Thyroid gland (tissue), 4 donors: ENCODE measurements at regions of chr19 and their contacts with region 1.

Region 1: DNA sequence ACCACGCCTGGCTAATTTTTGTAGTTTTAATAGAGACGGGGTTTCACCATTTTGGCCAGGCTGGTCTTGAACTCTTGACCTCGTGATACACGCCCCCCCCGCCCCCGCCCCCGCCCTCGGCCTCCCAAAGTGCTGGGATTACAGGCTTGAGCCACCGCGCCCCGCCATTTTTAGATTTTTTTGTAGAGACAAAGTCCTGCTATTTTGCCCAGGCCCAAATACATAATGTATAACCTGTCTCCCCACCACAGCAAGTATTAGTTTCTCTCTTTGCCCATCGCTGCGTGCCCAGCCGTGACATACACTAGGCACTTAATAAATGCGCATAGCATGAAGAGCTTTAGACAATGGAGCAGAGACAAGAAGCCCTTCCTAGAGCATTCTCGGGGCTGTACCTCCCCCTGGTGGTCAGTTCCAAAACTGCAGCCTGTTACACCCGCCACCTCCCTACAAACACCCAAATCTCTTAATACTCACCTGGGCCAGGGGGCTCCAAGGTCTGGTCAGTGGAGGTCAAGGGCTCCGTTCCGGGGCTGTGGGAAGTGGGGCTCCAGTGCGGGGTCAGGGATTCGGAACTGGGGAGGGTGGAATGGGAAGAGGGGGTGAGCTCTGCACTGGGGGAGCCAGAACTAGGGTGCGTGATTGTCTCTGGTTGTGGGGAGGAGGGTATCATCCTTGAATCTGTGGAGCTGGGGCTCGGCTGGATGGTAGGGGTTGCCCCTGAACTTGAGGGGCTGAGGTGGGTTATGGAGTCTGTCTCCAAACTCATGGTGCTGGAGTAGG is 22.5 kb downstream of the IQCN start:
- DNase-seq: peak; percentile 66 to 72
- H3K4me3 ChIP-seq: no peak overlapping the region
- H3K27ac ChIP-seq: no peak overlapping the region
- H3K4me1 ChIP-seq: peaks cover 21 to 39% of the 10 kb centered on the region in 2 donors
- H3K27me3 ChIP-seq: no peaks in the 10 kb centered on the region
- CTCF ChIP-seq: peak; percentile 93 to 97 (median 94)
- POLR2A ChIP-seq: no peak

Region 2: GRCh38 chr19:18117692-18118378 is 133.9 kb before region 1 on chr19:
- intact Hi-C with region 1: loop called (anchors 5 kb)
- DNase-seq: peak; percentile 90 to 91
- H3K4me3 ChIP-seq: peak overlapping the region; percentile 14 to 53 (median 47)
- H3K27ac ChIP-seq: peak overlapping the region; percentile 25 to 66 (median 63)
- H3K4me1 ChIP-seq: peaks cover 16 to 18% of the 10 kb centered on the region in 2 donors
- H3K27me3 ChIP-seq: no peaks in the 10 kb centered on the region
- CTCF ChIP-seq: no peak
- POLR2A ChIP-seq: no peak

Region 3: GRCh38 chr19:18214779-18215433 is 36.9 kb before region 1 on chr19:
- intact Hi-C with region 1: loop called (anchors 5 kb)
- DNase-seq: no peak
- H3K4me3 ChIP-seq: no peak overlapping the region
- H3K27ac ChIP-seq: no peak overlapping the region
- H3K4me1 ChIP-seq: no peaks in the 10 kb centered on the region
- H3K27me3 ChIP-seq: no peaks in the 10 kb centered on the region
- CTCF ChIP-seq: no peak
- POLR2A ChIP-seq: no peak